Activated CD4-positive, alpha-beta T cell treated with anti-CD3 and anti-CD28 coated beads, Interleukin-2, amount 10 ng/mL, durations not matched to agents 24 days and 14 days (primary cell): ENCODE measurements at regions of chr5 and their contacts with region 1.

Region 1: GRCh38 chr5:180353048-180353979 is at the start of gene GFPT2:
- DNase-seq: peak; percentile 91
- H3K4me3 Mint-ChIP-seq: peak within 1 kb of the TSS; percentile 79
- H3K27ac Mint-ChIP-seq: no peak within 1 kb of the TSS
- H3K4me1 Mint-ChIP-seq: no peaks in the 10 kb centered on the region
- H3K27me3 Mint-ChIP-seq: peaks cover 53% of the 10 kb centered on the region
- total RNA-seq, gene GFPT2: 0.42 TPM in 1 of 2 replicates, not detected in the other

Region 2: DNA sequence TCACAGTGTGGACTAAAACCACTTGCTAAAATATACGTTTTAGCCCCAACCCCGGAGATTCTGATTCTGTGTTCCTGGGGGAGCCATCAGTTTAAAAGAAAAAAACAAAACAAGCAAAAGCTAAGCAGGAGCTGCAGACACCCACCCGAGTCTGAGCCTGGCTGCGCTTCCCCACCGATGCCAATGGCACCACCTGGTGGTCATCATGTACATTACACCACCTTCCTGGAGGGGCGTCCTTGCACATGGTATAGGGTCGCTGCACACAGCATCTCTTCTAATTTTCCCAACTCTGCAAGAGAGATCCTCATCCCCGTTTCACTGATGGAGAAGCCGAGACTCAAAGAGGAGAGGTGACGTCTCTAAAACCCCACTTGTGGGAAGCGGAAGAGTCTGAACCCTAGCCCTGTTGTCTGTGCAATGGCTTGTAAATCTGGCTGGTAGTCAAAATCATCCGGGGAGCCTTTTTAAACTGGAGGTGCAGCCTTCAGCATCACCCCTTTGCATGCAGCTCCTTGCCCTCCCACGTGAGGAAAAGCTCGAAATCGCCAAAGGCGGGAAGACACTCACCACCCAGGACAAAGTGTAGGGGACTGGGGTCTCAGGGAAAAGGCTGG is 117.8 kb after region 1 on chr5:
- intact Hi-C with region 1: loop called (anchors 10 kb)
- DNase-seq: peak; percentile 85
- H3K4me3 Mint-ChIP-seq: no peak overlapping the region
- H3K27ac Mint-ChIP-seq: no peak overlapping the region
- H3K4me1 Mint-ChIP-seq: no peaks in the 10 kb centered on the region
- H3K27me3 Mint-ChIP-seq: peaks cover 2% of the 10 kb centered on the region